Panc1 (cell line): ENCODE measurements at regions of chr11 and their contacts with region 1.

Region 1: DNA sequence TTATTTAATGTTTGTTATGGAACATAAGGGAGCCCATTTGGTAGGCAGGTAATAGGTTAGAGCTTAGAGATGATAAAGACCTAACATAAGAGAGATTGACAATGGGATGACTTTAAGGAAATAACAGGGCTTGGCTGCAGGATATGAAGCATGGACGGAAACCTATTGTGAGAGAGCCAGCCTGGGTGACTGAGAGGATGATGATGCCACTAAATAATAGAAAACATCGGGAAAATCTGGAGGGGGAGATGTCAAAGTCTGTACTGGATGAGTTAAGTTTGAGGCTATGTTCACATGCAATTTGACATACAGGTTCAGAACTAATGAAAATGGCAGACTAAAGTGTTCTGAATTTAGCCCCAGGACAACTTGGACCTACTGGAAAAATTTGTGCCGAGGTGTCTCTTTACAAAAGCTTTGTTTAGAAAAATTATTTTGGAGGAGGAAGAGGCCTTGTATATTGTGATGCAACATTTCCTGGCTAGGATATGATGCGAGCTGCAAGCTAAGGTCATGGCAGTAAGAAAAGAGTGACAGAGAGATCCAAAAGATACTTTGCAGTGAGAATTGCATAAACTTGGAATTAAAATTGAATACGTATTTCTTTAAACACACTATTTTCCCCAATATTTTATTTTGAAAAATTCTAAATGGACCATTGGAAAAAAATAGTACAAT is 339.3 kb upstream of the PLET1 start:
- DNase-seq: no peak
- ATAC-seq: no peak
- H3K4me3 ChIP-seq: no peak overlapping the region
- H3K27ac ChIP-seq: no peak overlapping the region
- H3K4me1 ChIP-seq: no peaks in the 10 kb centered on the region
- H3K27me3 ChIP-seq: peaks cover 8% of the 10 kb centered on the region; the same call in 1 of the 2 replicates
- CTCF ChIP-seq: no peak

Region 2: DNA sequence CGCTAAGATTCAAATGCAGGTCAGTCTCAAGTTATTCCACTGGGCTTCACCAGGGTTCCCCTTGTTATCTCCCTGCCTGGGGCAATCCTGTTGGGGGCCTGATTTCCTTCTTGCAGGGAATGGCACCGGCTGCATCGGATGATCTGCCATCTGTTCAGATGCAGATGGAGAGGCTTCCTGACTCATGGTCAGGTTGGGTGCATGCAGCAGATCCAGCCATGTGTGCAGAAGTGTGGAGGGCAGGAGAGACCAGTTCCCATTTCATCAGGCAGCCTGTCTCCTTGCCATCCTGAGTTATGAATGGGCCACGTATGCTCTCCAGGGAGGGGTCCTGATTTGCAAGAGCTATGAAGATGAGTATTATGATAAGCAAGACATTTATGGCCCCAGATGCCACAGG is 178.1 kb before region 1 on chr11:
- CTCF ChIA-PET with region 1: interaction called, 12 read pairs
- POLR2A ChIA-PET with region 1: no interaction called
- in situ Hi-C with region 1: no loop called
- intact Hi-C with region 1: no loop called
- DNase-seq: no peak
- ATAC-seq: no peak
- H3K4me3 ChIP-seq: no peak overlapping the region
- H3K27ac ChIP-seq: no peak overlapping the region
- H3K4me1 ChIP-seq: no peaks in the 10 kb centered on the region
- H3K27me3 ChIP-seq: no peaks in the 10 kb centered on the region; the same call in 1 of the 2 replicates
- CTCF ChIP-seq: no peak